WTC11 (cell line): ENCODE measurements at regions of chrX and their contacts with region 1.

Region 1: GRCh38 chrX:130079824-130080406 is 30.4 kb downstream of the ELF4 start:
- DNase-seq: peak; percentile 52
- ATAC-seq: peak; percentile 65
- H3K4me3 Mint-ChIP-seq: no peak overlapping the region
- H3K27ac Mint-ChIP-seq: no peak overlapping the region
- H3K4me1 Mint-ChIP-seq: peaks cover 15% of the 10 kb centered on the region
- H3K27me3 Mint-ChIP-seq: no peaks in the 10 kb centered on the region
- CTCF ChIP-seq: peak; percentile 53

Region 2: GRCh38 chrX:130009658-130010223 is 70.2 kb before region 1 on chrX:
- CTCF ChIA-PET with region 1: no interaction called
- POLR2A ChIA-PET with region 1: no interaction called
- DNase-seq: no peak
- ATAC-seq: no peak
- H3K4me3 Mint-ChIP-seq: no peak overlapping the region
- H3K27ac Mint-ChIP-seq: no peak overlapping the region
- H3K4me1 Mint-ChIP-seq: no peaks in the 10 kb centered on the region
- H3K27me3 Mint-ChIP-seq: no peaks in the 10 kb centered on the region
- CTCF ChIP-seq: no peak

Region 3: DNA sequence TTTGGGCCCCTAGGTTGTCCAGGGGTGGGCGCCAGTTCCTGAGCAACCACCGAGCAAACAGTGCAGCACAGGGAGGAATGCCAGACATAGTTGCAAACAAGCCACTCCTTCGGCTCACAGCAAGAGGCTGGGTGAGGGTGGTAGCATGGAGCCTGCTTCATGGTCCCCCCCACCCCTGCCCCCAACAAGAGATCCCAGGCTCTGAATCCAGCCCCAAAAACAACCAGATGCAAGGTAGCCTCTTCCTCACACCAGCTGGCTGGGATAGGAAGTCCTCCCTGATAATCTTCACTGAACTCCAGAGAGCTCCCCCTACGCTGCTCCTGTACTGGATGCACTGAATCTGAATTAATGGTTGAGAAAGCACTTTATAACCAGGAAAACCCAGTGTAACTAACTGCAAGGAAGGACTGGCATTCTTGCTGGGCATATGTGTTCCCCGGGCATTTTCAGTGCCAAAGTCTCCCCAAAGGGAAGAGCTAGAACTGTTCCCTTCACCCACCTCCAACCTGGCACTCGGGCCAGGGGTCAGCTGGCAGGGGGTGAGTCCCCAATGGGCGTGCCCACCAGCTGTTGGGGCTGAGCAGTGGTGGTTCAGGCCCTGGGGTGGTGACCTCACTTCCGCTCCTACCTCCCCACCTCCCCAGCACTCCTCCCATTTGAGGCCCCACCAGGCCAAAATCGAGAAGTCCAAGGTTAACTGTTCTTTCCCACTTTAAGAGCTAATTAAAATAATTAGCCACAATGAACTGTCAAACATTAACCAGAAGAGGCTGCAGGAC is 28.9 kb after region 1 on chrX:
- CTCF ChIA-PET with region 1: interaction called, 13 read pairs
- POLR2A ChIA-PET with region 1: no interaction called
- DNase-seq: peak; percentile 14
- ATAC-seq: peak; percentile 46
- H3K4me3 Mint-ChIP-seq: peak overlapping the region; percentile 52; the same call in 1 of the 2 replicates
- H3K27ac Mint-ChIP-seq: no peak overlapping the region
- H3K4me1 Mint-ChIP-seq: peaks cover 20% of the 10 kb centered on the region
- H3K27me3 Mint-ChIP-seq: peaks cover 47% of the 10 kb centered on the region
- CTCF ChIP-seq: no peak

Region 4: DNA sequence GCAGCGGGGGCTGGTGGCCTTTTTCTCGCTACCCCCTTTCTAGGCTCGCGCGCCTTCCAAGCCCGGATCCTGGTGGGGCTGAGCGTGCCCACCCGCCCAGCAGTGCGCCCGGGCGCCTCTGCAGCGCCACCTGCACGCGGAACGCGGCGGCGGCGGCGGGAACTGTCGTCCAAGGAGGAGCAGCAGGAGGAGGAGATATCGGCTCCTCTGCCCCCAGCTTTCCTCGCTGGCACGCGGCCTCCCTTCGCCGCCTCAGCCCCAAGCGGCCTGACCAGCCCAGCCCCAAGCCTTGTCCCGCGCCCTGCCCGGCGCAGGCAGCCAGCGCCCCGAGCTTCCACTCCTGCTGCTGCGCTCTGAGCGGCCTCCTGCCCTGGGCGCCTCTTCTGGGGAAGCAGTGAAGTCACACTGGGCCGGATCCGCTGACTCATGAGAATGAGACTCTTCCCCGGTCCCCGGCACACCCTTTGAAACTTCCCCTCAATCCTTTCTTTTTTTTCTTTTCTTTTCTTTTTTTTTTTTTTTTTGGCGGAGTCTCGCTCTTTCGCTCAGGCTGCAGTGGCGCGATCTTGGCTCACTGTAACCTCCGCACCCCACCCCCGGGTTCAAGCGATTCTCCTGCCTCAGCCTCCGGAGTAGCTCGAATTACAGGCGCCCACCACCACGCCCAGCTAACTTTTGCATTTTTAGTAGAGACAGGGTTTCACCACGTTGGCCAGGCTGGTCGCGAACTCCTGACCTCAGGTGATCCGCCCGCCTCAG is 41.0 kb after region 1 on chrX:
- CTCF ChIA-PET with region 1: interaction called, 25 read pairs
- POLR2A ChIA-PET with region 1: interaction called, 4 read pairs
- DNase-seq: peak; percentile 77
- ATAC-seq: peak; percentile 79
- H3K4me3 Mint-ChIP-seq: peak overlapping the region; percentile 61
- H3K27ac Mint-ChIP-seq: no peak overlapping the region
- H3K4me1 Mint-ChIP-seq: peaks cover 8% of the 10 kb centered on the region
- H3K27me3 Mint-ChIP-seq: peaks cover 25% of the 10 kb centered on the region
- CTCF ChIP-seq: peak; percentile 41; the same call in 1 of the 2 replicates

Region 5: DNA sequence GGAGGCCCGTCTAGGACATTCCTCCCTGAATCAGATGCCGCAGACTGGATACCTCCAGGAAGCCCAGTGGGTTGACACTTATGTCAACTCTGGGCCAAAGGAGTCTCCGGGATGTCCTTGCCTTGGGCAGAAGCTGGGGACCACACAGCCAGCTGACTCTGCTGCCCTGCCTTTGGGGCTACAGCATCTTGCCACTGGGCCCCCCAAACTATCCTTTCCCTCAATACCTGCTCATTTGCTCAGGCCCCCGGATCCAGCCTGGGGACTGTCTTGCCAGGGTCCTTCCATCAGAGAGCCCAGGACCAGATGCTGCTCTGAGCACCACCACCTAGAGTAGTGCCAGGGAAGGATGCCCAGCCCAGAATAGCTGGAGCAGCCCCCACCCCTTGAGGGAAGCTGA is 110.9 kb after region 1 on chrX:
- CTCF ChIA-PET with region 1: interaction called, 21 read pairs
- POLR2A ChIA-PET with region 1: no interaction called
- DNase-seq: no peak
- ATAC-seq: no peak
- H3K4me3 Mint-ChIP-seq: no peak overlapping the region
- H3K27ac Mint-ChIP-seq: no peak overlapping the region
- H3K4me1 Mint-ChIP-seq: no peaks in the 10 kb centered on the region
- H3K27me3 Mint-ChIP-seq: no peaks in the 10 kb centered on the region
- CTCF ChIP-seq: no peak